ENCODE measurements at regions of chr3 and their contacts with region 1.

Region 1: GRCh38 chr3:67113802-67114407 is 115.8 kb downstream of the KBTBD8 start:
- DNase-seq: peak; percentile 65 to 81 (median 74)
- ATAC-seq: peak; percentile 98
- H3K4me3 ChIP-seq: no peak overlapping the region
- H3K27ac ChIP-seq: no peak overlapping the region
- H3K4me1 ChIP-seq: no peaks in the 10 kb centered on the region
- H3K27me3 ChIP-seq: no peaks in the 10 kb centered on the region
- CTCF ChIP-seq: peak; percentile 82 to 92 (median 86)
- EP300 ChIP-seq: no peak
- POLR2A ChIP-seq: no peak
- RAD21 ChIP-seq: peak; percentile 63 to 84; a peak in 3 of 4 replicates

Region 2: GRCh38 chr3:67357610-67358458 is 243.9 kb after region 1 on chr3:
- CTCF ChIA-PET with region 1: no interaction called
- POLR2A ChIA-PET with region 1: no interaction called
- in situ Hi-C with region 1: loop called (anchors 10 kb)
- intact Hi-C with region 1: loop called (anchors 5 kb)
- DNase-seq: peak in 2 of 4 experiments; percentile 13 to 28
- ATAC-seq: peak; percentile 76
- H3K4me3 ChIP-seq: no peak overlapping the region
- H3K27ac ChIP-seq: no peak overlapping the region
- H3K4me1 ChIP-seq: peaks cover 0 to 6% of the 10 kb centered on the region in 2 experiments; a peak in 1 of 5 replicates
- H3K27me3 ChIP-seq: no peaks in the 10 kb centered on the region
- CTCF ChIP-seq: peak; percentile 35 to 49 (median 37); a peak in 5 of 6 replicates
- EP300 ChIP-seq: no peak
- POLR2A ChIP-seq: no peak
- RAD21 ChIP-seq: peak in 1 of 2 experiments; percentile 45; a peak in 2 of 4 replicates

Measured in K562 (cell line).